ENCODE measurements at regions of chr3 and their contacts with region 1.

Region 1: DNA sequence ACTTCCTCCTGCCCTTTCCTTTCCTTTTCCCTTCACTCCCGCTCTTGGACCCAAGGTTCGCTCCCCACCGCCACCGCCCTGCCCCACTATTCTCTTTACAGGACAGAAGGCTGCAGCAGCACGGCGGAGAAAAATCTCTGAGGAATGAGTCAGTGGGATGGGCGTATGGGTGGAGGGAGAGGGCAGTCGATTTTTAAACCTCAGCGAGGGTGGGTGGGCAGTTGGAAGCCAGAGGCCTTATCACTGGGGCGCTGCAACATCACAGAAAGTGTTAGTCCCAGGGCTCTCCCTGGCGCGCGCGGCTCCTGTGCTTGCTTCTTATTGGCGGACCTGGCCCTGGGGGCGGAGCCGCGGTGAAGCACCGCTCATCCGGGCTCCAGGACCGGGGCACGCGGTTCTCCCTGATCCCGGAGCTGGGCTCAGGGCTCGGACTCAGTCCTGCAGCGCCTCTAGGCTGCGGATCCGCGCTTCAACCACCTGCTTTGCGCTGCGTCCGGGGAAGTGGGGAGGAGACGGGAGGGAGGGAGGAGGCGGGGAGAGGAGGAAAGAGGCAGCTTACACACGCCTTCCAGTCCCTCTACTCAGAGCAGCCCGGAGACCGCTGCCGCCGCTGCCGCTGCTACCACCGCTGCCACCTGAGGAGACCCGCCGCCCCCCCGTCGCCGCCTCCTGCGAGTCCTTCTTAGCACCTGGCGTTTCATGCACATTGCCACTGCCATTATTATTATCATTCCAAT is at the start of gene ALCAM:
- DNase-seq: peak; percentile 99
- ATAC-seq: peak; percentile 84
- H3K4me3 ChIP-seq: peak within 1 kb of the TSS; percentile 78
- H3K27ac ChIP-seq: peak within 1 kb of the TSS; percentile 88
- H3K4me1 ChIP-seq: no peaks in the 10 kb centered on the region; the same call in 1 of the 2 replicates
- H3K27me3 ChIP-seq: no peaks in the 10 kb centered on the region
- CTCF ChIP-seq: peak; percentile 97
- POLR2A ChIP-seq: peak; percentile 78
- RAD21 ChIP-seq: peak; percentile 93
- total RNA-seq, gene ALCAM: 400 and 423 TPM in 2 replicates

Region 2: GRCh38 chr3:104291437-104291851 is 1075.0 kb before region 1 on chr3:
- CTCF ChIA-PET with region 1: no interaction called
- POLR2A ChIA-PET with region 1: no interaction called
- dilution Hi-C with region 1: no loop called
- in situ Hi-C with region 1: no loop called
- intact Hi-C with region 1: loop called (anchors 5 kb)
- DNase-seq: no peak
- ATAC-seq: peak; percentile 42; the same call in 1 of the 2 replicates
- H3K4me3 ChIP-seq: peak overlapping the region; percentile 29; the same call in 1 of the 2 replicates
- H3K27ac ChIP-seq: no peak overlapping the region
- H3K4me1 ChIP-seq: no peaks in the 10 kb centered on the region
- H3K27me3 ChIP-seq: no peaks in the 10 kb centered on the region
- CTCF ChIP-seq: no peak
- POLR2A ChIP-seq: no peak
- RAD21 ChIP-seq: no peak

Region 3: DNA sequence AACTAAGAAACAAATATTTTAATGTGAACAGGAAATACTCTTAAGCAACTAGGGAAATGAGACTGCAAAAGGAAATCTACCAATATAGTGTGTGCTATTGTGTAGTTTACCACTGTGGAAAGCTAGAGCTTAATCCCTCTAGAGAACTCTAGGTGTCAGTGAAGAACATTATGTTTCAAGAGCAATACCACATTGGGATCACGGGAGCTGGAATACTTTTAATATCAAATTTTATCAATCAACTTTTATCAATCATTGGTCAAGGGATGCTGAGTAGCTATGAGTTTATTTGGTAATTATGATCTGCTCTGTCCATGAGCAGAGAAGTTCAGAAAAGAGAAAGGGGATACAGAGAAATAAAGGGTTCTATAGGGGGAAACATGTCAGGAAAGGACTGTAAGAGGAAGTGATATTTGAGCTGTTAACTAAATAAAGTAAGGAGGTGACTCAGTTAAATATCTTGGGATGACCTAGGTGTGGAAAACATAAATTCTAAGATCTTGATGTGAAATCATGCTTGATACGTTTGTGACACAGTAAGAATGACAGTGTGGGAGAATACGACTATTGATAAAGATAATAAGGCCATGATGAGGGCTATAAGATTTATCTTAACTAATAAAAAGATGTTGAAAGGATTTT is 762.0 kb before region 1 on chr3:
- CTCF ChIA-PET with region 1: interaction called, 5 read pairs
- POLR2A ChIA-PET with region 1: interaction called, 10 read pairs
- dilution Hi-C with region 1: no loop called
- in situ Hi-C with region 1: loop called (anchors 10 kb)
- intact Hi-C with region 1: loop called (anchors 1 kb)
- DNase-seq: peak; percentile 48
- ATAC-seq: peak; percentile 86
- H3K4me3 ChIP-seq: no peak overlapping the region
- H3K27ac ChIP-seq: no peak overlapping the region
- H3K4me1 ChIP-seq: no peaks in the 10 kb centered on the region
- H3K27me3 ChIP-seq: no peaks in the 10 kb centered on the region
- CTCF ChIP-seq: peak; percentile 51
- POLR2A ChIP-seq: no peak
- RAD21 ChIP-seq: peak; percentile 53

Region 4: GRCh38 chr3:104831071-104831470 is 535.4 kb before region 1 on chr3:
- CTCF ChIA-PET with region 1: no interaction called
- POLR2A ChIA-PET with region 1: no interaction called
- dilution Hi-C with region 1: no loop called
- in situ Hi-C with region 1: no loop called
- intact Hi-C with region 1: loop called (anchors 10 kb)
- DNase-seq: peak; percentile 18
- ATAC-seq: peak; percentile 29
- H3K4me3 ChIP-seq: no peak overlapping the region
- H3K27ac ChIP-seq: no peak overlapping the region
- H3K4me1 ChIP-seq: peaks cover 2% of the 10 kb centered on the region; the same call in 1 of the 2 replicates
- H3K27me3 ChIP-seq: no peaks in the 10 kb centered on the region
- CTCF ChIP-seq: no peak
- POLR2A ChIP-seq: no peak
- RAD21 ChIP-seq: no peak

Region 5: GRCh38 chr3:105166893-105167292 is 199.6 kb before region 1 on chr3:
- CTCF ChIA-PET with region 1: no interaction called
- POLR2A ChIA-PET with region 1: no interaction called
- dilution Hi-C with region 1: no loop called
- in situ Hi-C with region 1: no loop called
- intact Hi-C with region 1: loop called (anchors 10 kb)
- DNase-seq: peak; percentile 83
- ATAC-seq: peak; percentile 90
- H3K4me3 ChIP-seq: no peak overlapping the region
- H3K27ac ChIP-seq: no peak overlapping the region
- H3K4me1 ChIP-seq: peaks cover 4% of the 10 kb centered on the region
- H3K27me3 ChIP-seq: no peaks in the 10 kb centered on the region
- CTCF ChIP-seq: no peak
- POLR2A ChIP-seq: no peak
- RAD21 ChIP-seq: no peak

Region 6: GRCh38 chr3:105518806-105519418 is 152.4 kb after region 1 on chr3:
- CTCF ChIA-PET with region 1: interaction called, 11 read pairs
- POLR2A ChIA-PET with region 1: interaction called, 3 read pairs
- dilution Hi-C with region 1: no loop called
- in situ Hi-C with region 1: no loop called
- intact Hi-C with region 1: loop called (anchors 1 kb)
- DNase-seq: peak; percentile 73
- ATAC-seq: peak; percentile 75
- H3K4me3 ChIP-seq: no peak overlapping the region
- H3K27ac ChIP-seq: no peak overlapping the region
- H3K4me1 ChIP-seq: no peaks in the 10 kb centered on the region; the same call in 1 of the 2 replicates
- H3K27me3 ChIP-seq: no peaks in the 10 kb centered on the region
- CTCF ChIP-seq: peak; percentile 68
- POLR2A ChIP-seq: no peak
- RAD21 ChIP-seq: peak; percentile 79